ENCODE measurements at regions of chr4 and their contacts with region 1.

Region 1: DNA sequence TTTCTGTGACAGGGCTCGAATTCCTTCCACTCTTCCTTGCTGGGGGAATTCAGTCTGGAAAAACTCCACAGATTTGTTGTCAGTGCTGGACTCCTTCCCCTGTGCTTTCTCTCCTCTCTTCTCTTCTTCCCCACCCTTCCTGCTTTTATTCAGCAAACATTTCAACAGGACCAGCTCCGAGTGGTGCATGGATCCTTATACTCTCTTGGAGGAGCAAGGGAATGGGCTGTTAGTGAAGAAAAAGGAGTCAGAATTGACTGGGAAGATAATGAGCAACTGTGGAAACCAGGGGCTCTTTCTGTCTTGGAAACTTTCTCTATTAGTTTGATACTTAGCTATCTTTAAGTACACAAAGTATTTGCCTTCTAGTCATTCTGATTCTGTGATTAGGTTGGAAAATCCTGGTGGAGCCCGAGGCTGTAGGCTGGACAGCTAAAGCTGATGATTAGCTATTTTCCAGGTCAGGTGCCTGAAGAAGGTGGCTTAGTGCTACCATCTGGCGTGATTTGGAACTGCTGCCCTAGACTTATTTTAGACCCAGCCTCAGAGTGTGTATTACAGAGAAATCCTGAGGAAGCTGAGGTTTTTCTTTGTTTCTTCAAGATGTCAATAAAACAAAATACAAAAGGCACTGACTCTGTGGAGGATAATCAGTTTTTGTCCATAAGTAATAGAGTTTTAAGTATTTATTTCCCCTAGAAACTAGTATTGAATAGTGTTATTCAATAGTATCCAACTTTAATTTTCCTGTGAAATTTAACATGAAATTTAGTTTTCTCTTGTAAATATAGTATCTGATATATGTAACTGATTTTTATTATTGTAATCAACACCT is 38.4 kb downstream of the NAP1L5 start:
- DNase-seq: peak; percentile 83
- H3K4me3 ChIP-seq: no peak overlapping the region
- H3K27ac ChIP-seq: no peak overlapping the region
- H3K4me1 ChIP-seq: peaks cover 20% of the 10 kb centered on the region
- H3K27me3 ChIP-seq: no peaks in the 10 kb centered on the region
- CTCF ChIP-seq: peak; percentile 77 to 80
- POLR2A ChIP-seq: no peak

Region 2: DNA sequence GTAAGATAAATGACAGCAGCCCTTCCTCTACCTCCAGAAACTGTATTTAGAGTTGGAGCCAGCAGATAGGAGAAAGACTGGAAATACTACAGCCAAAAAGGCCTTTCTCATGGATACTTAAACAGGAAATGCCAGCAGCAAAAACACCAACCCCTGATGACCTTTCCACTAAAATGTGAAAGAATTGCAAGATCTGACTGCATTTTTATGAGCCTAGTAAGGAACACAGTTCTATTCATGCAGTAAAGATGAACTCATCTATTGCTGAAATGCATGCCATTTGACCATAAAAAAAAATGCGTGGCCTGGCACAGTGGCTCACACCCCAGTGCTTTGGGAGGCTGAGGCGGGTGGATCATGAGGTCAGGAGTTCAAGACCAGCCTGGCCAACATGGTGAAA is 520.7 kb before region 1 on chr4:
- CTCF ChIA-PET with region 1: no interaction called
- POLR2A ChIA-PET with region 1: no interaction called
- dilution Hi-C with region 1: no loop called
- intact Hi-C with region 1: no loop called
- DNase-seq: peak; percentile 64
- H3K4me3 ChIP-seq: no peak overlapping the region
- H3K27ac ChIP-seq: no peak overlapping the region
- H3K4me1 ChIP-seq: peaks cover 12% of the 10 kb centered on the region
- H3K27me3 ChIP-seq: no peaks in the 10 kb centered on the region
- CTCF ChIP-seq: no peak
- POLR2A ChIP-seq: no peak

Region 3: GRCh38 chr4:88523325-88524129 is 135.7 kb before region 1 on chr4 and contains the start of gene PYURF:
- CTCF ChIA-PET with region 1: interaction called, 368 read pairs
- POLR2A ChIA-PET with region 1: no interaction called
- dilution Hi-C with region 1: no loop called
- intact Hi-C with region 1: no loop called
- DNase-seq: peak; percentile 95
- H3K4me3 ChIP-seq: peak within 1 kb of the TSS; percentile 91 to 93 (median 92)
- H3K27ac ChIP-seq: peak within 1 kb of the TSS; percentile 86
- H3K4me1 ChIP-seq: peaks cover 16% of the 10 kb centered on the region
- H3K27me3 ChIP-seq: no peaks in the 10 kb centered on the region
- CTCF ChIP-seq: no peak
- POLR2A ChIP-seq: peak; percentile 95
- total RNA-seq, gene PYURF: 79.7 and 81.8 TPM in 2 replicates

Region 4: GRCh38 chr4:88591787-88592599 is 67.3 kb before region 1 on chr4 and contains the start of gene HERC3:
- CTCF ChIA-PET with region 1: interaction called, 47 read pairs
- POLR2A ChIA-PET with region 1: no interaction called
- dilution Hi-C with region 1: no loop called
- intact Hi-C with region 1: loop called (anchors 1 kb)
- DNase-seq: peak; percentile 93
- H3K4me3 ChIP-seq: peak within 1 kb of the TSS; percentile 60 to 81 (median 80)
- H3K27ac ChIP-seq: peak within 1 kb of the TSS; percentile 56
- H3K4me1 ChIP-seq: peaks cover 9% of the 10 kb centered on the region
- H3K27me3 ChIP-seq: no peaks in the 10 kb centered on the region
- CTCF ChIP-seq: peak in 1 of 2 donors; percentile 12
- POLR2A ChIP-seq: no peak
- total RNA-seq, gene HERC3: 21.2 and 25.6 TPM in 2 replicates

Region 5: GRCh38 chr4:88613417-88613875 is 45.8 kb before region 1 on chr4:
- CTCF ChIA-PET with region 1: interaction called, 22 read pairs
- POLR2A ChIA-PET with region 1: no interaction called
- dilution Hi-C with region 1: no loop called
- intact Hi-C with region 1: loop called (anchors 1 kb)
- DNase-seq: peak; percentile 78
- H3K4me3 ChIP-seq: peak overlapping the region in 1 of 3 experiments; percentile 12
- H3K27ac ChIP-seq: peak overlapping the region; percentile 85
- H3K4me1 ChIP-seq: peaks cover 52% of the 10 kb centered on the region
- H3K27me3 ChIP-seq: no peaks in the 10 kb centered on the region
- CTCF ChIP-seq: no peak
- POLR2A ChIP-seq: no peak

Region 6: GRCh38 chr4:88672987-88673386 is 13.7 kb after region 1 on chr4:
- CTCF ChIA-PET with region 1: interaction called, 39 read pairs
- POLR2A ChIA-PET with region 1: no interaction called
- dilution Hi-C with region 1: no loop called
- intact Hi-C with region 1: no loop called
- DNase-seq: peak; percentile 65
- H3K4me3 ChIP-seq: no peak overlapping the region
- H3K27ac ChIP-seq: no peak overlapping the region
- H3K4me1 ChIP-seq: no peaks in the 10 kb centered on the region
- H3K27me3 ChIP-seq: no peaks in the 10 kb centered on the region
- CTCF ChIP-seq: peak; percentile 56 to 74
- POLR2A ChIP-seq: no peak

Measured in endothelial cell of umbilical vein (primary cell).